Caco-2 (cell line): ENCODE measurements at regions of chr20 and their contacts with region 1.

Region 1: DNA sequence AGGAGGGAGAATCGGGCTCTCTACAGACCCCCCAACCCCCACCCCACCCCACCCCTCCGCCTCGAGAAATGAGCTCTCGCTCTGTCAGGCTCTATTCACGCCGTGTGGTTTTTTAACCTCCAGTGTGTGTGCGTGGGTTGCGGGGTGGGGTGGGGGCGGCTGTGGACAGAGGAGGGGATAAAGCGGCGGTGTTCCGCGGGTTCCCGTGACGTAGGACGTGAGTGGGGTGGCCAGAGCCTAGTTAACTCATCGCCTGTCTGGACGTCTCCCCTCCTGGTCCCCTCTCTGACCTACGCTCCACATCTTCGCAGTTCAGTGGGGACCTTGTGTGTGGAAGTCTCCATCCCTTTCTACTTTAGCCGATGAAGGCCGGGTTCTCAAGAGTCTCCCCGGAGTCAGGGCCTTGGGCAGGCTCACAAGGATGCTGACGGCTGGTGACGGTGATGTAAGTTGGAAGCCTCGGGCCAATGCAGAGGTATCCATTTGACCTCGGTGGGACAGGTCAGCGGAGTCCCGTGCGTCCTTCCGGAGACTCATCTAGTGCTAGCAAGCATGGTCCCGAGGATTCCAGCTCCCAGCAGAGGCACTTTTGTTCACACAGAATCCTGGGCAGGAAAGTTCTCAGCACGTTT is 1507.1 kb upstream of the DEFB115 start:
- DNase-seq: peak in 1 of 2 experiments; percentile 36
- H3K4me3 ChIP-seq: no peak overlapping the region
- H3K4me3 Mint-ChIP-seq: no peak overlapping the region
- H3K27ac Mint-ChIP-seq: no peak overlapping the region
- H3K4me1 ChIP-seq: no peaks in the 10 kb centered on the region
- H3K4me1 Mint-ChIP-seq: peaks cover 14% of the 10 kb centered on the region
- H3K27me3 ChIP-seq: no peaks in the 10 kb centered on the region
- H3K27me3 Mint-ChIP-seq: no peaks in the 10 kb centered on the region
- CTCF ChIP-seq: no peak

Region 2: DNA sequence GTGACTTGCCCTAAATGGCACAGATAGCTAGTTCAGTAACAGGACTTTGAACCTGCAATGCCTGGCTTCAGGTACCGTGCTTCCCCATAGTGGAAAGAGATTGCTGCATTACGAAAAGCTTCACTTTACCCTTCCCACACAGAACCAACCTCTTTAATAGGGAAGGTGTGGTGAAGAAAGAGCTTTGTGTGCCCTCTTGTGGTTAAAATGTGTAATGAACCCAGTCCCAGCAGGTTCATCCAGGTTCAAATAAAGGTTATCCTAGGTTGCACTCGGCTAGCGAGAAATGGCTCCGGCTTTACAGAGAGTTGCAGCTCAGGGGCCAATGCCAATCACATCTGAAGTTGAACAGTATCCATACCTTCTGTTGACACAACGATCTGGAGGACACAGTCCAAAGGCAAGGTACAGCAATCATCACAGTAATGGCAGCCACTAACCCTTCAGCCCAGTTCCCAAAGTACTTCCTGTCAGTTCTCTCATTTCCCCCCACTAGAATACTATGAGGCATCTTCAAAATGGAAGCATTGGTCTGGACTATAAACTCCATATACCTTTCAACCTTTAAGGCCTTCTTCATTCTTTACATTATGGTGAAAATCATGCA is 1510.0 kb after region 1 on chr20:
- CTCF ChIA-PET with region 1: no interaction called
- POLR2A ChIA-PET with region 1: no interaction called
- intact Hi-C with region 1: loop called (anchors 5 kb)
- DNase-seq: peak; percentile 63 to 75
- H3K4me3 ChIP-seq: no peak overlapping the region
- H3K4me3 Mint-ChIP-seq: no peak overlapping the region
- H3K27ac Mint-ChIP-seq: no peak overlapping the region
- H3K4me1 ChIP-seq: no peaks in the 10 kb centered on the region
- H3K4me1 Mint-ChIP-seq: no peaks in the 10 kb centered on the region
- H3K27me3 ChIP-seq: 0 out of 2 replicates have a peak, but pooled peaks cover 2% of the 10 kb centered on the region
- H3K27me3 Mint-ChIP-seq: peaks cover 3% of the 10 kb centered on the region
- CTCF ChIP-seq: peak; percentile 91 to 96